Activated CD4-positive, alpha-beta memory T cell treated with anti-CD3 and anti-CD28 coated beads for 36 hours (primary cell): ENCODE measurements at regions of chr10 and their contacts with region 1.

Region 1: DNA sequence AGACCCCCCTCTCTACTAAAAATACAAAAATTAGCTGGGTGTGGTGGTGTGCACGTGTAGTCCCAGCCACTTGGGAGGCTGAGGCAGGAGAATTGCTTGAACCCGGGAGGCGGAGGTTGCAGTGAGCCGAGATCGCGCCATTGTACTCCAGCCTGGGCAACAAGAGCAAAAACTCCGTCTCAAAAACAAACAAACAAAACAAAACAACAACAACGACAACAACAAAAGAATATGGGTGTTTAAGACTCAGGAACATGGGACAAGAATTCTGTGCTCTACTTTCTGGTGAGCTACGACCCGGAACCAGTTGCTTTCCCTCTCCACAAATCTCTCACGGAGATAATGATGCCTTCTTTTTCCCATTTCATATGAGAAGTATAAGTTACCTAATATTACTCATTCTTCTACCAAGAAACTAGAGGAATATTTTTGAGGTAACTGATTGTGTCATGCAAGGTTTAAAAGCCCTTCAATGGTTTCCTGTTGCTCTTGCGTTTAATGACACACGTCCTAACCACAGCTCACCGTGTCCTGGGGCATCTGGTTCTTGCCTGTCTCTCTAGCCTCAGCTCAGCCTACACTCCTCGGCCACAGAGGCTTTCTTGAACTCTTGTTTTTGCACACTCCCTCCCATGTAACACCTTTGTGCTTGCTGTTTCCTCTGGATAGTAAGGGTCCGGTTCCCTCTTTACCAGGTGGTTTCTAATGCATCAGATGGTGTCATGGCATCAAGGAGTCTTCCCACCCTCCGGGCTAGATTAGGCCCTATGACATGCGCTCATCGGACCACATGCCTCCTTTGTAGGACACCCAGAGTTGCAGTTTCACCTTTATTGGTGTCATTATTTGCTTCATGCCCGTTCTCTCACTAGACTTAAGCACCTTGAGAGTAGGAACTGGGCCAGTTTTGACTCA is 67.5 kb downstream of the PFKFB3 start:
- DNase-seq: peak; percentile 91
- H3K4me3 Mint-ChIP-seq: peak overlapping the region; percentile 35
- H3K27ac Mint-ChIP-seq: peak overlapping the region; percentile 97
- H3K4me1 Mint-ChIP-seq: peaks cover 63% of the 10 kb centered on the region
- H3K27me3 Mint-ChIP-seq: no peaks in the 10 kb centered on the region

Region 2: DNA sequence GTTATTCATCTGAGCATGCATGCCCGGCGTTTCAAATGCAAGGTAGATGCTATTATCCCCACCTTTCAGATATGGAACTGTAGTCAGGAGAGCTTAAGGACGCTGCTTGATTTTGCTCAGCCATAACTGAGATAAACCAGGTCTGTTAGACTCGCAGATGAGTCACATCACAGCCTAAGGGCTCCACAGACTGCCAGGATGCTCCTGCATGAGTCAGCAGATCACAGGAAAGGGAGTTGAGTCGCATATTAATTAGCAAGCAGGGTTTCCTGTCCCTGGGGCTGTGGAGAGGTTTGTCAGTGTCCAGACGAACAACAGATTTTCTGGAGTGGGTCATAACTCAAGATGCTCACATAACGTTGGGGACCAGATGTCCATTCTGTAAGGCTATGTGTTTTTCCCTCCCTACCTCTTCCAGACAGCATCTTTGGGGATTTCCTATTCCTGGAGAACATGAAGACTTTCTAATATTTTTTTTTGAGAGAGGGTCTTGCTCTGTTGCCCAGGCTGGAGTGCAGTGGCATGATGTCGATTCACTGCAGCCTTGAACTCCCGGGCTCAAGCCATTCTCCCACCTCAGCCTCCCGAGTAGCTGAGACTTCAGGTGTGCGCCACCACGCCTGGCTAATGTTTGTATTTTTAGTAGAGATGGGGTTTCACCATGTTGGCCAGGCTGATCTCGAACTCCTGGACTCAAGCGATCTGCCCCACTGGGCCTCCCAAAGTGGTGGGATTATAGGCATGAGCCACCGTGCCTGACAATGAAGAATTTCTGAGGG is 30.8 kb before region 1 on chr10:
- CTCF ChIA-PET with region 1: no interaction called
- POLR2A ChIA-PET with region 1: interaction called, 3 read pairs
- intact Hi-C with region 1: loop called (anchors 1 kb)
- DNase-seq: peak; percentile 86
- H3K4me3 Mint-ChIP-seq: no peak overlapping the region
- H3K27ac Mint-ChIP-seq: peak overlapping the region; percentile 76
- H3K4me1 Mint-ChIP-seq: peaks cover 25% of the 10 kb centered on the region
- H3K27me3 Mint-ChIP-seq: no peaks in the 10 kb centered on the region

Region 3: DNA sequence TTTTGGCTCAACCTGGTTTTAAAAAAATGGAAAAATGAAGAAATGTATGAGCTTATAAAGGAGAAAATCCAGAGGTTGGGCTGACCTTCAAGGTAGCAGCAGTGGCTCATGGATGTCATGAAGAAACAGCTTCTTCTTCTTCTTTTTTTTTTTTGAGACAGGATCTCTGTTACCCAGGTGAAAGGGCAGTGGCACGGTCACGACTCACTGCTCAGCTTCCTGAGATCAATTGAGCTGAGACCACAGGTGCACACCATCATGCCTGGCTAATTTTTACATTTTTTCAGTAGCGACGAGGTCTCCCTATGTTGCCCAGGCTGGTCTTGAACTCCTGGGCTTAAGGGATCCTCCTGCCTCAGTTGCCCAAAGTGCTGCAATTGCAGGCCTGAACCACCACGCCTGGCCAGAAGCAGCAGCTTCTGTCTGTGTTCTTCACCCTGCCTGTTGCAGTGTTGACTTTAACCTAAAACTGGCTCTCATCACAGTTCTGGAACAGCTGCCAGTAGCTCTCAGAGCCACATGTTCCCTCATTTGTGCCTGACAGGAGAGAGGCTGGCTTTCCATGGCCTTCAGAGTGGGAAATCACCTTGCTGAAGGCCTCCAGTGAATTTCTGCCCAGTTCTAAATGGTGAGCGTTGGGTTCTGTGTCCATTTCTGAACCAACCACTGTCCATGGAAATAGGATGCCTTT is 50.3 kb after region 1 on chr10:
- CTCF ChIA-PET with region 1: no interaction called
- POLR2A ChIA-PET with region 1: no interaction called
- intact Hi-C with region 1: no loop called
- DNase-seq: no peak
- H3K4me3 Mint-ChIP-seq: no peak overlapping the region
- H3K27ac Mint-ChIP-seq: no peak overlapping the region
- H3K4me1 Mint-ChIP-seq: no peaks in the 10 kb centered on the region
- H3K27me3 Mint-ChIP-seq: no peaks in the 10 kb centered on the region

Region 4: GRCh38 chr10:6348096-6348874 is 78.1 kb after region 1 on chr10:
- CTCF ChIA-PET with region 1: interaction called, 13 read pairs
- POLR2A ChIA-PET with region 1: interaction called, 29 read pairs
- intact Hi-C with region 1: loop called (anchors 1 kb)
- DNase-seq: peak; percentile 93
- H3K4me3 Mint-ChIP-seq: peak overlapping the region; percentile 73
- H3K27ac Mint-ChIP-seq: peak overlapping the region; percentile 99
- H3K4me1 Mint-ChIP-seq: peaks cover 57% of the 10 kb centered on the region
- H3K27me3 Mint-ChIP-seq: no peaks in the 10 kb centered on the region

Region 5: GRCh38 chr10:6607778-6608177 is 337.6 kb after region 1 on chr10:
- CTCF ChIA-PET with region 1: no interaction called
- POLR2A ChIA-PET with region 1: no interaction called
- intact Hi-C with region 1: loop called (anchors 5 kb)
- DNase-seq: no peak
- H3K4me3 Mint-ChIP-seq: peak overlapping the region; percentile 58
- H3K27ac Mint-ChIP-seq: peak overlapping the region; percentile 90
- H3K4me1 Mint-ChIP-seq: peaks cover 62% of the 10 kb centered on the region
- H3K27me3 Mint-ChIP-seq: no peaks in the 10 kb centered on the region